ENCODE measurements at regions of chr15 and their contacts with region 1.

Region 1: DNA sequence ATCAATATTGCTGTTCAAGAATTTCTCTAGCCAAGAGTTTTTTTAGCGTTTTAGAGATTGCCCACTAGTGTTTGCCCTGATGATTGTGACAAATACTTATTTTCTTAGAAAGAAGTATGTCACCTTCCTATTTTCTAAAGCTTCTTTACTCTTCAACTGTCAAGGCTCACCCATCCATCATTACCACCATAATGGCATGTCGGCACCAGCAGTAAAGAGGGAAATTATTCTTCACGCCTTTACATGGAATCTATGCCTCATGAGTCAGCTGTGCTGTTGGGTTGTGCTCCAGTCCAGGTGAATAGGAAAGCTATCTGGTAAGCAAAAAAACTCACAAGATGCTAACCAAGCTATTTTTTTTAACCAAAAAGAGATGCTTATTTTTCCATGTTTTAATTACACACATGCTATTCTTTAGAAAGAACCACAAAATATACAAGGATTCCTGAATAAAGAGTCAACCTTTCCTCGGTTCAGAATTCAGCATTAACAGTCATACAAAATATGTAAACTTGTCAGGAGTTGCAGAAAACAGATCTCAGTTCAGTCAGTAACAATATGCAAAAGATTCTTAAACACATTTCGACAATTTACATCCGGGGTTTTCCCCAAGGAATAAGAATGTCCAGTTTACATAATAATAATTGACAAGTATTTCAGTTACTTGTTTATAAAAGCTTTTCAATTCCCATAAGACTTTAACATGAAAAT is 128.0 kb downstream of the ATP8B4 start:
- DNase-seq: no peak
- H3K4me3 ChIP-seq: no peak overlapping the region
- H3K27ac ChIP-seq: peak overlapping the region; percentile 28 to 60 (median 40)
- H3K4me1 ChIP-seq: peaks cover 24 to 94% (median 71%) of the 10 kb centered on the region in 4 donors
- H3K27me3 ChIP-seq: no peaks in the 10 kb centered on the region
- CTCF ChIP-seq: no peak
- EP300 ChIP-seq: no peak
- POLR2A ChIP-seq: no peak

Region 2: DNA sequence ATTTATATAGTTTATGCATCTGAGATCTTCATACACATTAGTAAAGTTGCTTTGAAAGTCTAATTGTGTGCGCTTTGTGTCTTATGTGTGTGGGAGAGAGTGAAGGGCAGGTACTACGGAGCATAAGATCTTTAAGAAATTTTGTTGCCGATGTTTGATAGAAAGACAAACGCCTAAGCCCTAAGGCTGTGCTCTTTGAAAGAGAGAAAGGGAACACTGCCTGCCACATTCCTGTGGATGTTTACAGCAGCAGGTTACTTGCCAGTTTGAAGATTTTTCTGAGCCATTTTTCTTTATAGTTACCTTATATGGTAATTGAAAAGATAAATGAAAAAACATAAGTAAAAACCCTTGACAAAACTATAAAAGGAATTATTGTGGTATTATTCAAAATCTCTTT is 353.1 kb before region 1 on chr15:
- intact Hi-C with region 1: loop called (anchors 10 kb)
- DNase-seq: no peak
- H3K4me3 ChIP-seq: peak overlapping the region in 3 of 4 donors; percentile 14 to 19 (median 17)
- H3K27ac ChIP-seq: peak overlapping the region; percentile 52 to 67 (median 58)
- H3K4me1 ChIP-seq: peaks cover 0 to 22% (median 19%) of the 10 kb centered on the region in 4 donors
- H3K27me3 ChIP-seq: no peaks in the 10 kb centered on the region
- CTCF ChIP-seq: no peak
- EP300 ChIP-seq: no peak
- POLR2A ChIP-seq: no peak